Activated CD4-positive, alpha-beta T cell treated with anti-CD3 and anti-CD28 coated beads, Interleukin-2, amount 10 ng/mL, durations not matched to agents 24 days and 14 days (primary cell): ENCODE measurements at regions of chr17 and their contacts with region 1.

Region 1: GRCh38 chr17:2244545-2245525 is 58.8 kb downstream of the SMG6 start:
- DNase-seq: peak; percentile 95
- H3K4me3 Mint-ChIP-seq: peak overlapping the region; percentile 18
- H3K27ac Mint-ChIP-seq: peak overlapping the region; percentile 81
- H3K4me1 Mint-ChIP-seq: peaks cover 70% of the 10 kb centered on the region
- H3K27me3 Mint-ChIP-seq: no peaks in the 10 kb centered on the region

Region 2: GRCh38 chr17:2054512-2055291 is 190.1 kb before region 1 on chr17 and contains the start of gene HIC1:
- intact Hi-C with region 1: loop called (anchors 1 kb)
- DNase-seq: peak; percentile 96
- H3K4me3 Mint-ChIP-seq: peak within 1 kb of the TSS; percentile 86
- H3K27ac Mint-ChIP-seq: peak within 1 kb of the TSS; percentile 88
- H3K4me1 Mint-ChIP-seq: peaks cover 22% of the 10 kb centered on the region
- H3K27me3 Mint-ChIP-seq: peaks cover 9% of the 10 kb centered on the region
- total RNA-seq, gene HIC1: 49.4 and 51.6 TPM in 2 replicates

Region 3: GRCh38 chr17:2157675-2158395 is 87.0 kb before region 1 on chr17:
- intact Hi-C with region 1: loop called (anchors 5 kb)
- DNase-seq: no peak
- H3K4me3 Mint-ChIP-seq: peak overlapping the region; percentile 21
- H3K27ac Mint-ChIP-seq: peak overlapping the region; percentile 60
- H3K4me1 Mint-ChIP-seq: peaks cover 33% of the 10 kb centered on the region
- H3K27me3 Mint-ChIP-seq: no peaks in the 10 kb centered on the region

Region 4: DNA sequence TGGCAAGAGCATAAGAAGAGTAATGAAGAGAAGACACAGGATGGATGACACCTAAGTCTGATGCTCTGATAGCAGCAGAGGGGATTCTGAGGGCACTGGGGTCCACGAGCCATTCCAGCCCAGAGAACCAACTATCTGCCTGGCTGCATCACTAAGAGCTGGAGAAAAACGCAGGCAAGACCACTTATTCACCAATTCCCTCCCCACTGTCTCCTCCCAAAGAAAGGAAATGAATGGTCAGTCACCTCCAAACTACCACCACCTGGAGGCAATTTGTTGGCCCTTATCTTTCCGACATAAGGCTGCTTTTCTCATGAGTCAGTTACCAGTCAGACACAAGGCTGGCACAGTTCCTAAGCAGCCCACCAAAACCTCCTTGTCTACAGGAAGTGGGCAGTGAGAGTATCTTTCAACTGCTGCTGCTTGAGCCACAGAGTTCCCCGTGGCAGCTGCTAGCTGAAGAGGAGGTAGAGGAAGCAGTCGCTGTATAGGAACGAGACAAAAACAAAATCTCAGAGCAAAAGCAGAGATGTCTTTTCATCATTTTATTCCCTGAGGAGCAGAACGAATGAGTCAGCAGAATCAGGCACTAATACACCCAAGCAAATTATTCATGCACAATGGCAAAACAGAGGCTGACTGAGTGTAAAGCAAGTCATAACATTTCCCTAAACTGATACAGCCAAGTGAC is 52.3 kb before region 1 on chr17:
- intact Hi-C with region 1: loop called (anchors 5 kb)
- DNase-seq: peak; percentile 81
- H3K4me3 Mint-ChIP-seq: peak overlapping the region; percentile 57
- H3K27ac Mint-ChIP-seq: peak overlapping the region; percentile 77
- H3K4me1 Mint-ChIP-seq: peaks cover 64% of the 10 kb centered on the region
- H3K27me3 Mint-ChIP-seq: no peaks in the 10 kb centered on the region

Region 5: GRCh38 chr17:2215616-2216364 is 29.0 kb before region 1 on chr17:
- intact Hi-C with region 1: loop called (anchors 2 kb)
- DNase-seq: peak; percentile 92
- H3K4me3 Mint-ChIP-seq: peak overlapping the region; percentile 84
- H3K27ac Mint-ChIP-seq: peak overlapping the region; percentile 96
- H3K4me1 Mint-ChIP-seq: peaks cover 51% of the 10 kb centered on the region
- H3K27me3 Mint-ChIP-seq: no peaks in the 10 kb centered on the region

Region 6: DNA sequence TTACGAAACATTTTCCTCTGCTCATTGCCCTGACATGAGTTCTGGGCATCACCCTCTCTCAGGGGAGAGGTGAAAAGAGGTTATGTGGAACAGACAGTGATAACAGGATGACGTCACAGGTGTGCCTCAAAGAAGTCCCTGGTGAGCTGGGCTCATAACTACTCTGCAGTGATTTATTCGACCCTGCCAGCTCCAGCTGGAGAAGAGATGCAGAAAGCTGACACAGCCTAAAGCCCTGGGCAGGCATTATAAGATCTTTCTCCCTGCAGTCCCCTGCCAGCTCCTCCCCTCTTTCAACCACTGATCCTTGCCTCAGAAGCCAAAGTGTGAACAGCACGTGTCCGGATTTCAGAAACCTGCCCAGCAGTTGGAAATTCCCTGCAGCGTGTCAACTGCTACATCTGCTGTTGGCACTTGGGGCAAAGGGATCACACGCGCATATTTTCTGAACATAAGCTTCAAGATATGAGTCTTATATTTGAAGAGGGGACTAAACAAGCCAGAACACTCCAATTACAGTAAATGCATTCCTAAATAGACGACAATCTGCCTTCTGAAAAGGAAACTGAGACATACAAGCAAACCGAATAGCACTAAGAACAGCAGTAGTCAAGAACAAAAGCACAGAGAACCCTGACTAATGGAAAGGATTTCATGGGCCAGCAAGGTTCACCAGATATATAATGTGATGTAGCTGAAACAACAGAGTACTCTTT is 21.8 kb before region 1 on chr17:
- intact Hi-C with region 1: loop called (anchors 2 kb)
- DNase-seq: peak; percentile 88
- H3K4me3 Mint-ChIP-seq: peak overlapping the region; percentile 43
- H3K27ac Mint-ChIP-seq: peak overlapping the region; percentile 88
- H3K4me1 Mint-ChIP-seq: peaks cover 45% of the 10 kb centered on the region
- H3K27me3 Mint-ChIP-seq: no peaks in the 10 kb centered on the region

Region 7: DNA sequence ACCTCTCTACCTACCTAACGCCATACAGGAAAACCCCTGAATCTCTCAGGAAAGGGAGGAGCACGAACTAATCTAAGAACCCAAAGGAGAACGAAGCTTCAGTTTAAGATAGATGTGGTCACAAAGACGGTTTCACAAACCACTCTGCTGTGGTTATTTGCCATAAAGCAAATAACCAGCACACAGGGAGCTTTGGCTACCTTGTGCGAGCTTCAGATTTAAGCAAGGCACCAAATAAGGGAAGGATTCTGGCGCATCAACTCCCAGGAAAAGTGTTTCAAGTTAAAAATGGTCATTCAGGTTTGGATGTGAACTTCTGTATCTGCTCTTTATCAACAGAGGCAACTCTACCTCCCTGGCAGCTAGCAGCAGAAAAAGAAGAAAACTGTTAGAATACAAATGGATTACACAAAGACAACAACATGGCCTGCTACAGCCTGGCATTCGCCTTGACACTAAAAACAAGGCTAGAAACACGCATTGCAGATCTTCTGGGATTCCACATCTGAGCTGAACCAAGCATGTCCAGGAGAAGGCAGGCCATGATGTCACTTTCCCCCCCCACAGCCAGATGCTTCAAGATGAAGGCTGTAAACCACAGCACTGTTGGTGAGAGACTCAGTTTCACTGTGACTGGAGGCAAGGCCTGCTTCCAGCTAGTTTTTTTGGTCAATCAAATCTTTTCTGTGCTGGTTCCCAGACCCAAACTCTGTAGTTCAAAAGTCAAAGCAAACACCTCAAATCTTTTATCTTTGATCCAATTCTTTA is 15.1 kb after region 1 on chr17:
- intact Hi-C with region 1: no loop called
- DNase-seq: peak; percentile 94
- H3K4me3 Mint-ChIP-seq: peak overlapping the region; percentile 81
- H3K27ac Mint-ChIP-seq: peak overlapping the region; percentile 98
- H3K4me1 Mint-ChIP-seq: peaks cover 71% of the 10 kb centered on the region
- H3K27me3 Mint-ChIP-seq: no peaks in the 10 kb centered on the region

Region 8: GRCh38 chr17:2282297-2282873 is 37.5 kb after region 1 on chr17:
- intact Hi-C with region 1: loop called (anchors 2 kb)
- DNase-seq: peak; percentile 76
- H3K4me3 Mint-ChIP-seq: no peak overlapping the region
- H3K27ac Mint-ChIP-seq: peak overlapping the region; percentile 76
- H3K4me1 Mint-ChIP-seq: peaks cover 36% of the 10 kb centered on the region
- H3K27me3 Mint-ChIP-seq: no peaks in the 10 kb centered on the region

Region 9: GRCh38 chr17:2323629-2324314 is 78.9 kb after region 1 on chr17:
- intact Hi-C with region 1: no loop called
- DNase-seq: no peak
- H3K4me3 Mint-ChIP-seq: no peak overlapping the region
- H3K27ac Mint-ChIP-seq: no peak overlapping the region
- H3K4me1 Mint-ChIP-seq: peaks cover 2% of the 10 kb centered on the region
- H3K27me3 Mint-ChIP-seq: no peaks in the 10 kb centered on the region